ENCODE measurements at regions of chr5 and their contacts with region 1.

Region 1: GRCh38 chr5:79612667-79613198 is 492 bp downstream of the TENT2 start:
- DNase-seq: no peak
- H3K4me3 ChIP-seq: peak overlapping the region; percentile 67 to 94
- H3K4me3 Mint-ChIP-seq: peak overlapping the region; percentile 94 to 100 (median 99)
- H3K27ac ChIP-seq: peak overlapping the region; percentile 96
- H3K27ac Mint-ChIP-seq: peak overlapping the region; percentile 98 to 99 (median 98)
- H3K4me1 ChIP-seq: peaks cover 32% of the 10 kb centered on the region
- H3K4me1 Mint-ChIP-seq: peaks cover 24 to 53% (median 36%) of the 10 kb centered on the region in 4 donors
- H3K27me3 ChIP-seq: no peaks in the 10 kb centered on the region
- H3K27me3 Mint-ChIP-seq: peaks cover 0 to 8% of the 10 kb centered on the region in 2 donors

Region 2: GRCh38 chr5:79514391-79515105 is 98.2 kb before region 1 on chr5:
- CTCF ChIA-PET with region 1: no interaction called
- POLR2A ChIA-PET with region 1: interaction called, 10 read pairs
- intact Hi-C with region 1: loop called (anchors 5 kb)
- DNase-seq: peak; percentile 90 to 93 (median 92)
- H3K4me3 ChIP-seq: peak overlapping the region; percentile 71 to 84
- H3K4me3 Mint-ChIP-seq: peak overlapping the region; percentile 96 to 99 (median 96)
- H3K27ac ChIP-seq: peak overlapping the region; percentile 82
- H3K27ac Mint-ChIP-seq: peak overlapping the region; percentile 94 to 100 (median 99)
- H3K4me1 ChIP-seq: peaks cover 18% of the 10 kb centered on the region
- H3K4me1 Mint-ChIP-seq: peaks cover 13 to 25% (median 16%) of the 10 kb centered on the region in 4 donors
- H3K27me3 ChIP-seq: peaks cover 9% of the 10 kb centered on the region
- H3K27me3 Mint-ChIP-seq: peaks cover 15 to 18% of the 10 kb centered on the region in 2 donors